ENCODE measurements at regions of chr7 and their contacts with region 1.

Region 1: DNA sequence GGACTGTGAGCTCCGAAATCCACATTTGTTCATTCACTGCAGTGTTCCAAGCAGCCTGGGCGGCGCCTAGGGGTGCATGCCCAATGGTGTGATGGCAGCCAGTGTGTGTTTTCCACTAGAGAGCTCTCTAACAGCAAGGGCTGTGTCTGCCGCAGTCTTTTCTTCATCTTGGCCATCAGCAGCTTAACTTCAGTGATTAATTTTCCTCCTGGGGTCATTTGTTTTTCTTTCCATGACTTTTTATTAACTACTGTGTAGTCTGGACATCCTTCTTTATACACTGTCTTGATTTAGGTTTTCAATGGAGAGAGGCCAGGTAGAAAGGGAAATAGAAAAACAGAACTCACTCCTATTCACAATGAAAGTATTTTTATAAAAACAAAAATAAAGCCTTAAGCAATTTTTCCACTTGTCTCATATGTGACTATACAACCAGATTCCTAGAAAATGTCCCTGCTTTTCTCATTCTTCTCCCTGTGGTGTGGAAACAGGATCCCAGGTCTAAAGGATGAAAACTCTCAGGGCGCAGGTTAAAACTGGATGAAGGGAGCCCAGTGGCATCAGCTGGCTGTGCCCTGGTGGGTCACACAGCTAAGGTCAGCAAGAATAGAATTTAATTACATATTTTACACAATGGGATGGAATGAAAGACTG is 176.8 kb downstream of the PKD1L1 start:
- DNase-seq: peak in 1 of 2 donors; percentile 94
- H3K4me3 ChIP-seq: no peak overlapping the region
- H3K27ac ChIP-seq: peak overlapping the region; percentile 76 to 79
- H3K4me1 ChIP-seq: peaks cover 3 to 28% of the 10 kb centered on the region in 2 donors
- H3K27me3 ChIP-seq: no peaks in the 10 kb centered on the region
- CTCF ChIP-seq: peak in 2 of 3 experiments; percentile 32 to 37

Region 2: GRCh38 chr7:47757921-47758411 is 13.5 kb before region 1 on chr7:
- intact Hi-C with region 1: loop called (anchors 1 kb)
- DNase-seq: peak; percentile 63 to 93
- H3K4me3 ChIP-seq: no peak overlapping the region
- H3K27ac ChIP-seq: peak overlapping the region; percentile 70 to 86
- H3K4me1 ChIP-seq: peaks cover 0 to 12% of the 10 kb centered on the region in 2 donors
- H3K27me3 ChIP-seq: no peaks in the 10 kb centered on the region
- CTCF ChIP-seq: no peak

Region 3: GRCh38 chr7:47786557-47787248 is 15.2 kb after region 1 on chr7:
- intact Hi-C with region 1: loop called (anchors 1 kb)
- DNase-seq: peak; percentile 15 to 88
- H3K4me3 ChIP-seq: no peak overlapping the region
- H3K27ac ChIP-seq: peak overlapping the region; percentile 86 to 91
- H3K4me1 ChIP-seq: peaks cover 13 to 49% of the 10 kb centered on the region in 2 donors
- H3K27me3 ChIP-seq: no peaks in the 10 kb centered on the region
- CTCF ChIP-seq: no peak

Region 4: GRCh38 chr7:48182718-48183369 is 411.4 kb after region 1 on chr7:
- intact Hi-C with region 1: no loop called
- DNase-seq: no peak
- H3K4me3 ChIP-seq: no peak overlapping the region
- H3K27ac ChIP-seq: no peak overlapping the region
- H3K4me1 ChIP-seq: no peaks in the 10 kb centered on the region
- H3K27me3 ChIP-seq: no peaks in the 10 kb centered on the region
- CTCF ChIP-seq: no peak